ENCODE measurements at regions of chr14 and their contacts with region 1.

Region 1: DNA sequence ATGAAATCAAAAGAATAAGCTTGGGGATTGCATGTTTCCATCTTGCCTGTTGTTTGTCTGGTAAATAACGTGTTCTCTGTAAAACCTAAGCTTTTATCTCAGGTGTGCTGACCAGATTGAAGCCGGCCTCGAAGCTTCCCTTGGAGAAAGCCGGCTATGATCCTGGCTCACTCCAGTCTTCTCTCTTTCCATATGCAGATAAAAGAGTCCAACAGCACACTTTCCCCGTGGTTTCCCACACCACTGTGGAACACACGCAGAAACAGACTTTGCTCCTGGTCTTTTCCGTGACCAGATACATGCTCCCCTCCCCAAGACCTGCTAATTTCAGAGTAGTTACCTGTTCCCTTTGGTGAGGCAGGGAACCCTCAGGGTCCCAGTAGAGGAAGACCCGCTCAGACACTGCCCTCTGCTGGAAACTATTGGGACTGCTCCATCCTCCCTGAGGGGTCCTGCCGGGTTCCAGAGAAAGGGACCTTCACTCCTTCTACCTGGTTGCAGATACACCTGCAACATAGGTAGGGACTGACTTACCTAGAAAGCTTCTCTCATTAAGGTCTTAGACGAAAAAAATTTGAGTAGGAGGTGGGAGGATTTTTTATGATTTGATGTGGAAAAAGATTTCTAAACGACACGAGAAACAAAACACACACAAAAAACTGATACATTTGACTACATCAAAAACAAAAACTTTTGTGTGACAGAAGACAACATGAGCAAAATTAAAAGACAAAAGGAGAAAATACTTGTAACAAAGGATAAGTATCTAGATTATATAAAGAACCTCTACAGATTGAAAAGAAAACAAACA is 415.5 kb upstream of the CCDC196 start:
- DNase-seq: peak; percentile 79
- ATAC-seq: peak; percentile 90
- H3K4me3 Mint-ChIP-seq: no peak overlapping the region
- H3K27ac Mint-ChIP-seq: no peak overlapping the region
- H3K4me1 Mint-ChIP-seq: no peaks in the 10 kb centered on the region
- H3K27me3 Mint-ChIP-seq: no peaks in the 10 kb centered on the region
- CTCF ChIP-seq: peak; percentile 90

Region 2: GRCh38 chr14:65164068-65164824 is 906.5 kb before region 1 on chr14:
- CTCF ChIA-PET with region 1: interaction called, 9 read pairs
- POLR2A ChIA-PET with region 1: no interaction called
- intact Hi-C with region 1: loop called (anchors 5 kb)
- DNase-seq: peak; percentile 54
- ATAC-seq: peak; percentile 65
- H3K4me3 Mint-ChIP-seq: no peak overlapping the region
- H3K27ac Mint-ChIP-seq: no peak overlapping the region
- H3K4me1 Mint-ChIP-seq: peaks cover 24% of the 10 kb centered on the region
- H3K27me3 Mint-ChIP-seq: no peaks in the 10 kb centered on the region
- CTCF ChIP-seq: peak; percentile 79

Region 3: DNA sequence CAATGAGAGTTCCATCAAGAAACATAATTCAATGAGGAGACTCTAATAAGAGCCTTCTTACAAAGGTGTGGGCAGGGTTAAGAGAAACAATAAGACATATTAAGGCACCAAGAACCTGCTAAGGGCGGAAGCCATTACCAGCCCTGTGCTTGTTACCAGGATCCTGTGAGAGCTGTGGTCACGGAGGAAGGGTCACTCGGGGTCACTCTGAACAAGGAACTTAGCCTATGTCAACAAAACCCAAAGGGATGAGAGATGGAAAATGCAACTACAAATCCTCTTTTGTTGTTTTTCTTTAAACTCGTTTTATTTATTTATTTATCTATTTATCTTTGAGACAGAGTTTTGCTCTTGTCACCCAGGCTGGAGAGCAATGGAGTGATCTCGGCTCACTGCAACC is 44.9 kb before region 1 on chr14:
- CTCF ChIA-PET with region 1: no interaction called
- POLR2A ChIA-PET with region 1: no interaction called
- intact Hi-C with region 1: no loop called
- DNase-seq: no peak
- ATAC-seq: no peak
- H3K4me3 Mint-ChIP-seq: no peak overlapping the region
- H3K27ac Mint-ChIP-seq: no peak overlapping the region
- H3K4me1 Mint-ChIP-seq: no peaks in the 10 kb centered on the region
- H3K27me3 Mint-ChIP-seq: no peaks in the 10 kb centered on the region
- CTCF ChIP-seq: no peak

Region 4: GRCh38 chr14:66056926-66057552 is 13.7 kb before region 1 on chr14:
- CTCF ChIA-PET with region 1: interaction called, 43 read pairs
- POLR2A ChIA-PET with region 1: no interaction called
- intact Hi-C with region 1: no loop called
- DNase-seq: no peak
- ATAC-seq: no peak
- H3K4me3 Mint-ChIP-seq: no peak overlapping the region
- H3K27ac Mint-ChIP-seq: peak overlapping the region; percentile 50
- H3K4me1 Mint-ChIP-seq: peaks cover 14% of the 10 kb centered on the region
- H3K27me3 Mint-ChIP-seq: peaks cover 2% of the 10 kb centered on the region
- CTCF ChIP-seq: no peak

Region 5: DNA sequence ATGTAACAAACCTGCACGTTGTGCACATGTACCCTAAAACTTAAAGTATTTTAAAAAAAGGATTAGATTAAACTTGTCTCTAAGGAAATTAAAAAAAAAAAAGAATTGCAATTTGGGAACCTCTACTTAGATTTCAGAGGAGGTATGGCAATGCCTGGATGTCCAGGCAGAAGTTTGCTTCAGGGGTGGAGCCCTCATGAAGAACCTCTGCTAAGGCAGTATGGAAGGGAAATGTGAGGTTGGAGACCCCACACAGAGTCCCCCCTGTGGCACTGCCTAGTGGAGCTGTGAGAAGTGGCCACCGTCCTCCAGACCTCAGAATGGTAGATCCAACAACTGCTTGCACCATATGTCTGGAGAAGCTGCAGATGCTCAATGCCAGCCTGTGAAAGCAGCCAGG is 135.8 kb after region 1 on chr14:
- CTCF ChIA-PET with region 1: no interaction called
- POLR2A ChIA-PET with region 1: no interaction called
- intact Hi-C with region 1: no loop called
- DNase-seq: peak; percentile 3
- ATAC-seq: no peak
- H3K4me3 Mint-ChIP-seq: no peak overlapping the region
- H3K27ac Mint-ChIP-seq: no peak overlapping the region
- H3K4me1 Mint-ChIP-seq: no peaks in the 10 kb centered on the region
- H3K27me3 Mint-ChIP-seq: peaks cover 1% of the 10 kb centered on the region
- CTCF ChIP-seq: no peak